ENCODE measurements at regions of chr6 and their contacts with region 1.

Region 1: GRCh38 chr6:37705239-37706051 is 7.8 kb upstream of the MDGA1 start:
- DNase-seq: peak; percentile 73
- ATAC-seq: peak; percentile 81
- H3K4me3 ChIP-seq: peak overlapping the region; percentile 20
- H3K27ac ChIP-seq: peak overlapping the region; percentile 12
- H3K4me1 ChIP-seq: peaks cover 2% of the 10 kb centered on the region
- H3K27me3 ChIP-seq: no peaks in the 10 kb centered on the region
- CTCF ChIP-seq: peak; percentile 68
- POLR2A ChIP-seq: no peak
- RAD21 ChIP-seq: peak; percentile 66

Region 2: DNA sequence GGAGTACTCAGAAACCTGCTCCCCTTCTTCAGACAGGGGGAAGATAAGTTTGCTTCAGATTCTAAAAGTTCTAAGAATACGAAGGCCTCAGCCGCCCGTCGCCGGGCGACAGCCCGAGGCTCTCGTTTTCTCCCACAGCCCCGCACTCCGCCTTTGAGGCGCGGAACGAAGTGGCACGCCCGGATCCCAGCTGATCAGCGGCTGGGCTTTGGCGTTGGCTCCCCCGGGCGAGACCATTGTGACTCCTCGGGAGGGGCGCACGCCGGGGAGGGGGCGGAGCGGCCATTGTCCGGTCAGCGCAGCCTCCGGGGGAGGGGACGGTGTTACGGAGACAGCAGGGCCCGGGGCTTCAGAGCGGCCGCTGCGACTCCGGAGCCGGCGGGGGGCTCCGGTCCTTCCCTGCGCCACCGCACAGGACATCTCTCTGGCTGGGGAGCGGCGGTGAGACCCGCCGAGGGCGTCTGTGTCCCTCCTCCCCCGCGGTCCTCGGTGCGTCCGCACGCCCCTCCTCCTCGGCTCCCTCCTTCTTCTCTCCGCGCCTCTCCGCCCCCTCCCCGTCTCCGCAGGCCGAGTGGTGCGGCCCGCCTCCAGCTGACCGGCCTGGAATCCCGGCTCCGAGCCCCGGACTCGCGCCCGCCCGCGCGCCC is 113.9 kb after region 1 on chr6 and contains the start of gene ZFAND3:
- CTCF ChIA-PET with region 1: no interaction called
- POLR2A ChIA-PET with region 1: no interaction called
- dilution Hi-C with region 1: no loop called
- in situ Hi-C with region 1: no loop called
- intact Hi-C with region 1: loop called (anchors 2 kb)
- DNase-seq: peak; percentile 96
- ATAC-seq: peak; percentile 90
- H3K4me3 ChIP-seq: peak within 1 kb of the TSS; percentile 47
- H3K27ac ChIP-seq: peak within 1 kb of the TSS; percentile 94
- H3K4me1 ChIP-seq: peaks cover 9% of the 10 kb centered on the region; the same call in 1 of the 2 replicates
- H3K27me3 ChIP-seq: no peaks in the 10 kb centered on the region
- CTCF ChIP-seq: no peak
- POLR2A ChIP-seq: peak; percentile 80
- RAD21 ChIP-seq: no peak
- total RNA-seq, gene ZFAND3: 10.9 and 13.1 TPM in 2 replicates

Region 3: DNA sequence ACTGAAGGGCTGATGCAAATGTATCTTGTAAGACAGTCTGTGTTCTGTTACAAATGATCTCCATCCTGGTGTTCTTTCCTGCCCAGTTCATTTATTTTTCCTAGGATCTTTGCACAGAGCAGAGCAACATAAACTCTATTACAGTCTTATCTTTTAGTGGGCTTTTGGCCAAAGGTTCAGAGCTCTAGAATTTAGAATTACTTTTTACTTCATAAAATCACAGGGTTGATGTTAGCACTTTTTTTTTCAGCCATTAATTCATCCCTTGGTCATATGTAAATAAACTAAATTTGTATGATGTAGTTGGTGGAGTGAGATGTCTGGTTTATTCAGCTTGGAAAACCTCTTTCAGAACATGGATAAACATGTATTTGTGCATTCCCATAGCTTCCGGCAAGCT is 295.9 kb after region 1 on chr6:
- CTCF ChIA-PET with region 1: interaction called, 4 read pairs
- POLR2A ChIA-PET with region 1: no interaction called
- dilution Hi-C with region 1: no loop called
- in situ Hi-C with region 1: loop called (anchors 10 kb)
- intact Hi-C with region 1: no loop called
- DNase-seq: peak; percentile 28
- ATAC-seq: peak; percentile 59
- H3K4me3 ChIP-seq: no peak overlapping the region
- H3K27ac ChIP-seq: no peak overlapping the region
- H3K4me1 ChIP-seq: no peaks in the 10 kb centered on the region; the same call in 1 of the 2 replicates
- H3K27me3 ChIP-seq: no peaks in the 10 kb centered on the region
- CTCF ChIP-seq: no peak
- POLR2A ChIP-seq: no peak
- RAD21 ChIP-seq: no peak

Region 4: DNA sequence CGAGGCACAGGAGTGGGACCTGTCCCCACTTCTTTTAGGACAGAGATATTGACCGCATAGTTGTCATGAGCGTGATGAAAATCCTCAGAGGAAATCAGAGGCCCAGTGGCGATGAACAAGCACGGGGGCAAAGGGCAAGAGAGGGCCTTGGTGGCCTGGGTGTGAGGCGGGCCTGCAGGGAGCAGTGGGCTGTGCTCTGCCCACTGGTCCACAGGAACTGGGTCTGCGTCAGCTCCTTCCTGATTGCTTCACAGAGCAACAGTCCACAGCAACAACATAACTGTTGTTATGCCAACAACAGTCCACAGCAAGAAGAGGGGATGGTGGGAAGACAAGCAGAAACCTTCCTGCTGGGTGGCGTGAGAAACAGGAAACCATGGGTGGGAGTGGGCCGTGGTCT is 449.7 kb after region 1 on chr6:
- CTCF ChIA-PET with region 1: no interaction called
- POLR2A ChIA-PET with region 1: no interaction called
- dilution Hi-C with region 1: no loop called
- in situ Hi-C with region 1: no loop called
- intact Hi-C with region 1: loop called (anchors 10 kb)
- DNase-seq: peak; percentile 35
- ATAC-seq: no peak
- H3K4me3 ChIP-seq: no peak overlapping the region
- H3K27ac ChIP-seq: peak overlapping the region; percentile 54
- H3K4me1 ChIP-seq: peaks cover 18% of the 10 kb centered on the region
- H3K27me3 ChIP-seq: no peaks in the 10 kb centered on the region
- CTCF ChIP-seq: no peak
- POLR2A ChIP-seq: no peak
- RAD21 ChIP-seq: no peak

Region 5: DNA sequence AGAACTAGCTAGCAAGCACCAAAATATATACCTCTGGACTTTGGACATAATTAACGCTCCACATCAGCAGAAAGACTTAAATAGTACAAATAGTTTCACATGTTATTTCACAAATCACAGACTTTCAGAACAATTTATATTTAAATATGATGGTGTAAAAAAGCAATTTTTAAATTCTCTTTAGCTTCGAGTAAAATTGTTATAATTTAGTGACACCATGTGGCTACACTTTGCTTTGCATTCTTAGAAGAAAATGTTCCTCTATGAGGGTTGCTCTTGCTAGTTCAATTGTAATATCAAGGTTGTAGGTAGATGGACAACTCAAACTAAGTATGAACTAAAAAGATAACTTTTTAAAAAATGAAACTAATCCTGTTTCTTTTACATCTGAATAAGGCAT is 865.3 kb after region 1 on chr6:
- CTCF ChIA-PET with region 1: no interaction called
- POLR2A ChIA-PET with region 1: no interaction called
- dilution Hi-C with region 1: no loop called
- in situ Hi-C with region 1: no loop called
- intact Hi-C with region 1: loop called (anchors 5 kb)
- DNase-seq: peak; percentile 40
- ATAC-seq: no peak
- H3K4me3 ChIP-seq: no peak overlapping the region
- H3K27ac ChIP-seq: no peak overlapping the region
- H3K4me1 ChIP-seq: no peaks in the 10 kb centered on the region
- H3K27me3 ChIP-seq: no peaks in the 10 kb centered on the region
- CTCF ChIP-seq: peak; percentile 53
- POLR2A ChIP-seq: no peak
- RAD21 ChIP-seq: peak; percentile 63

Measured in IMR-90 (cell line).